Naive thymus-derived CD8-positive, alpha-beta T cell (primary cell): ENCODE measurements at regions of chr5 and their contacts with region 1.

Region 1: GRCh38 chr5:134738133-134738962 is at the start of gene CAMLG:
- DNase-seq: peak; percentile 91 to 98 (median 96)
- ATAC-seq: peak; percentile 96
- H3K4me3 Mint-ChIP-seq: peak within 1 kb of the TSS; percentile 86 to 100 (median 95)
- H3K27ac Mint-ChIP-seq: peak within 1 kb of the TSS; percentile 67 to 99 (median 94)
- H3K4me1 Mint-ChIP-seq: peaks cover 7 to 45% (median 36%) of the 10 kb centered on the region in 4 donors
- H3K27me3 Mint-ChIP-seq: no peaks in the 10 kb centered on the region
- polyA plus RNA-seq, gene CAMLG: 38.1 to 39.3 (median 38.8) TPM

Region 2: DNA sequence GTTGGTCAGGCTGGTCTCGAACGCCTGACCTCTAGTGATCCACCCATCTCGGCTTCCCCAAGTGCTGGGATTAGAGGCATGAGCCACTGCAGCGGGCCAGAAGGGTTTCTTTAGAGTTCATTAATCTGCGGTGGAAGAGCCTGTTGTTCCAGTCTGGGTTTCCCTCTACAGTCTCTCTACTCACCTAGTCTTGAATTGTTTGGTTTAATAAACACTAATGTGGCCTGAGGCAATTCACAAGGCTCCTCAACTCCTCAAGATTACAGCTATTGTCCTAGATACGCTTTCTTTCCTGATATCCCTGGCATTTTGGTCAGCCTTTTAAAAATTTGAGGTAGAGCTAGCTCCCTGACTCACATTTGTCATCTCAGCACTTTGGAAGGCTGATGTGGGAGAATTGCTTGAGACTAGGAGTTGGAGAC is 101.2 kb before region 1 on chr5:
- POLR2A ChIA-PET with region 1: no interaction called
- DNase-seq: no peak
- ATAC-seq: no peak
- H3K4me3 Mint-ChIP-seq: no peak overlapping the region
- H3K27ac Mint-ChIP-seq: no peak overlapping the region
- H3K4me1 Mint-ChIP-seq: peaks cover 0 to 7% (median 4%) of the 10 kb centered on the region in 4 donors
- H3K27me3 Mint-ChIP-seq: no peaks in the 10 kb centered on the region

Region 3: DNA sequence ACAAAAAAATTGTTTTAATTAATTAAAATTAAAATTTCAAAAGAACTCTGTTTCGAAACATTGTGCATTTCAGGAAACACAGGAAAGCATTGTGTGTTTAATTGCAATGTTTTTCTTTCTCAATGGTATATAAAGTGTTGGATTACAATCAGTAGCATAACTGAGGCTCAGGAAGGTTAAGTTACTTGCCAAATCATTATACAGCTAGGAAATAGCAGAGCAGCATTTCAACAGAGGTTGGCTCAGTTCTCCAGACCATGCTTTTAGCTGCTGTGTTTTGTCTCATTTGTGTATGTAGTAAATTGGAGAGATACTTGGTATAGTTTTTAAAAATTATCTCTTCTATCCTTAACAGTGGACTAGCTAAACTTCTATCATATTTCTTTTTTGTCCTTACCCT is 30.0 kb before region 1 on chr5:
- POLR2A ChIA-PET with region 1: no interaction called
- DNase-seq: no peak
- ATAC-seq: no peak
- H3K4me3 Mint-ChIP-seq: no peak overlapping the region
- H3K27ac Mint-ChIP-seq: peak overlapping the region in 1 of 10 donors; percentile 42
- H3K4me1 Mint-ChIP-seq: no peaks in the 10 kb centered on the region
- H3K27me3 Mint-ChIP-seq: no peaks in the 10 kb centered on the region

Region 4: DNA sequence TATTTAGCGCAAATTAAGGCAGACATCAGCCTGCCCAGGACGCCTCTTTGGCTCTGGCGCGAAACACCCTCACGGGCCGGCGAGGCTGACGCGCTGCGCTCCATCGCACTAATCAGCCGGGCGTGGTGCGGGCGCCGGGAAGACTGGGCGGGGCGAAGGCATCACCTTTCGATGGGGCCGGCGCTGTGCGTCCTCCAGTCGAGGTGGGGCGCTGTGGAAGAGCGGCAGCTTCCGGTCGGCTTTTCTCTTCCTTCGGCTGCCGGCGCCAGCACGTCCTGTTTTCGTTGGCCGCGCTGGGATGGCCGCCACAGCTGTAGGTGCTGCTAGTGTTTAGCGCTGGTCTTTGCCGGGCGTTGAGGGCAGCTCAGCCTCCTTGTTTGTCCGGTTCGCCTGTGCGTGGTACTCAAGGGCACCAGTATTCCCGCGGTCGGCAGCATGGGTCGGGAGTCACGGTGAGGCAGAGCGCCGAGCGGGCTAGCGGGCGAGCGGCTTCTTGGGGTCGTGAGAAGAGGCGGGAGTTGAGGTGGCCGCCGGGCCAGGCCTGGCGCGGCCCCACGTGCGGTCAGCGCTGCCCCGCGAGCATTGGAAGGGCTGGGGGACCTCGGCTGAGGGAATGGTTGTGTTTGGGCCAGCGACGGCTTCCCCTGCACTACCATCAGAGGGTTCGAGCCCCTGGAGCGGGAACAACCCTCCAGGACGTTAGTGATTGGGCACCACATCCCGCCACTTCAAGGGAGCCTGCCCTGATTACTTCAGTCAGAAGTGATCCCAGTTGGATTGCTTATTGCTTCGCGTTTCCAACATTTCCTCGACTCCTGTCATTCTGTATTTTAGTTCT is 20.4 kb after region 1 on chr5 and contains the start of gene DDX46:
- POLR2A ChIA-PET with region 1: interaction called, 50 read pairs
- DNase-seq: peak; percentile 88 to 95 (median 90)
- ATAC-seq: peak; percentile 97 to 98
- H3K4me3 Mint-ChIP-seq: peak within 1 kb of the TSS; percentile 99 to 100 (median 100)
- H3K27ac Mint-ChIP-seq: peak within 1 kb of the TSS; percentile 95 to 99 (median 98)
- H3K4me1 Mint-ChIP-seq: peaks cover 20 to 44% (median 41%) of the 10 kb centered on the region in 4 donors
- H3K27me3 Mint-ChIP-seq: no peaks in the 10 kb centered on the region
- polyA plus RNA-seq, gene DDX46: 17.9 to 23.4 (median 21.4) TPM

Region 5: DNA sequence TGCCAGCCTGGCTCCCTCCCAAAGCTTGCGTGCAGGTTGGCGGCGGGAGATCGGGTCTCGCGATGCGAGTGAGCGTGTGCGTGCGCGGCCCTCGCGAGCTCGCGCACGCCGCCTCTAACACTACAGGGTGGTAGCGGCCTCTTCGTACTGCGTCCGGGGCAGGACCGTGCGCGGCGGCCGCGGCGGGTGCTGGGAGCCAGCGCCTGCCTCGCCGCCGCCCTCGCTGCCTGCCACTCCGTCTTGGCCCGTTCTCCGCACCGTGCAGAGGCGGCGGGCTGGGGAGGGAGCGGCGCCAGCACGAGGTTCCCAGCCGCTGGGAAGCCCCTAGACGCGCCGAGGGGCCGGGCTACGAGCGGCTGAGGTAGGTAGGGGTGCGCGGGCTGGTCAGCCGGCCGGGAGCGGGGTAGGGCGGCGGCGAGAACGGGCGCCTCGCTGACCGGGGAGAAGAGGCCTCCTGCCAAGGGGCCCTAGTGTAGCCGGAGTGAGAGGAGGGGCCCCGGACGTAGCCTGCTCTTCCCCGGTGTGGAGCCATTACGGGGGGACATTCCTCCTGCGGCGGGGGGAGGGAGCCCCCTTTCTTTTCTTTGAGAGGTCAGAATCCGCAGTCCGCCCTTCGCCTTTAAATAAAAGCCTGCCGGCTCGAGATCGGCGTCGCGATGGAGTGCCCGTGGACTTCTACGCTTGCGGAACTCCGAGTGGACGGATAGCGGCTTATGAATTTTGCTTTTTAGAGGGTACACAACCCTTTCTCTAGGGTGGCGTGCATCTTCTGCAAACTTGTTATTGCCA is 107.7 kb after region 1 on chr5 and contains the start of gene C5orf24:
- POLR2A ChIA-PET with region 1: interaction called, 14 read pairs
- DNase-seq: peak; percentile 82 to 95 (median 89)
- ATAC-seq: peak; percentile 90
- H3K4me3 Mint-ChIP-seq: peak within 1 kb of the TSS; percentile 86 to 95 (median 90)
- H3K27ac Mint-ChIP-seq: peak within 1 kb of the TSS; percentile 90 to 97 (median 96)
- H3K4me1 Mint-ChIP-seq: peaks cover 13 to 42% (median 34%) of the 10 kb centered on the region in 4 donors
- H3K27me3 Mint-ChIP-seq: no peaks in the 10 kb centered on the region
- polyA plus RNA-seq, gene C5orf24: 6.6 to 9.4 (median 9.2) TPM

Region 6: DNA sequence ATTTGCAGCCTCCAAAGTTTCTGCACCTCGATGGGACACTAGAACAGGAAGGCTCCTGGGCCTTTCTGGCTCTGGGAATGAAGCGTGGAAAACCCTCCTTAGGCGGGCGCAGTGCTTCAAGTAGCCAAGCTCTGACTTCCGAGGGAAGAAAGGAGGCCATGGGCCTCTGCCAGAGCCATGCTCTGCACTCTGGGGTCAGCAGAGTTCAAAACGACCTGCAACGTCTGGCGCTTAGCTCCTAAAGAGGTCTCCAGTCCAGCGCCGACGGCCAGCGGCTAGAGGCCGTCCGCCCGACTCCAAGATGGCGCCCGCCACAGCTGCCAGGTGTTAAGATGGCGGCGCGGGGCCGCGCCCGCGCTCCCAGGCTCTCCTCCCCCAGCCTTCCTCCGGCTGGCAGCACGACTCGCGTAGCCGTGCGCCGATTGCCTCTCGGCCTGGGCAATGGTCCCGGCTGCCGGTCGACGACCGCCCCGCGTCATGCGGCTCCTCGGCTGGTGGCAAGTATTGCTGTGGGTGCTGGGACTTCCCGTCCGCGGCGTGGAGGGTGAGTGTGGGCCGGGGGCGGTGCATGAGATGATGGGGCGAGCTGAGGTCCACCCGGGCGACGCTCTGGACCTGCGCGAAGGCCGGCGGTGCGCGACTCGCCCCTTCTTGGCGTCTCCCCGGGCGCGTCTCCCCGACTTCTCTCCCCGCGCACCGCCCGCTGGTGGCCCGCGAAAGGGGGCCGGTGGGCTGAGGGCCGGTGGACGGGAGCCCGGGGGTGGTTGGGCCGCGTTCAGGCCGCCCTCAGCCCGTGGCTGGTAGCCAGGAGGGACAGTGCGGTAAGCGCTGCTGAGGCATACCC is 135.9 kb after region 1 on chr5 and contains the start of gene TXNDC15:
- POLR2A ChIA-PET with region 1: interaction called, 12 read pairs
- DNase-seq: peak; percentile 66 to 87 (median 78)
- ATAC-seq: peak; percentile 95
- H3K4me3 Mint-ChIP-seq: peak within 1 kb of the TSS; percentile 89 to 97 (median 94)
- H3K27ac Mint-ChIP-seq: peak within 1 kb of the TSS; percentile 92 to 97 (median 96)
- H3K4me1 Mint-ChIP-seq: peaks cover 24 to 48% (median 40%) of the 10 kb centered on the region in 4 donors
- H3K27me3 Mint-ChIP-seq: no peaks in the 10 kb centered on the region
- polyA plus RNA-seq, gene TXNDC15: 8.7 to 12.2 (median 9.1) TPM